ENCODE measurements at regions of chr13 and their contacts with region 1.

Region 1: GRCh38 chr13:50731400-50731799 is 112.1 kb downstream of the DLEU7 start:
- DNase-seq: peak; percentile 91
- H3K4me3 ChIP-seq: peak overlapping the region in 1 of 3 experiments; percentile 28
- H3K27ac ChIP-seq: peak overlapping the region; percentile 99
- H3K4me1 ChIP-seq: peaks cover 16% of the 10 kb centered on the region
- H3K27me3 ChIP-seq: no peaks in the 10 kb centered on the region
- CTCF ChIP-seq: no peak

Region 2: GRCh38 chr13:50594276-50595051 is 136.9 kb before region 1 on chr13:
- CTCF ChIA-PET with region 1: no interaction called
- dilution Hi-C with region 1: no loop called
- in situ Hi-C with region 1: no loop called
- intact Hi-C with region 1: loop called (anchors 5 kb)
- DNase-seq: no peak
- H3K4me3 ChIP-seq: no peak overlapping the region
- H3K27ac ChIP-seq: no peak overlapping the region
- H3K4me1 ChIP-seq: peaks cover 28% of the 10 kb centered on the region
- H3K27me3 ChIP-seq: no peaks in the 10 kb centered on the region
- CTCF ChIP-seq: no peak

Region 3: DNA sequence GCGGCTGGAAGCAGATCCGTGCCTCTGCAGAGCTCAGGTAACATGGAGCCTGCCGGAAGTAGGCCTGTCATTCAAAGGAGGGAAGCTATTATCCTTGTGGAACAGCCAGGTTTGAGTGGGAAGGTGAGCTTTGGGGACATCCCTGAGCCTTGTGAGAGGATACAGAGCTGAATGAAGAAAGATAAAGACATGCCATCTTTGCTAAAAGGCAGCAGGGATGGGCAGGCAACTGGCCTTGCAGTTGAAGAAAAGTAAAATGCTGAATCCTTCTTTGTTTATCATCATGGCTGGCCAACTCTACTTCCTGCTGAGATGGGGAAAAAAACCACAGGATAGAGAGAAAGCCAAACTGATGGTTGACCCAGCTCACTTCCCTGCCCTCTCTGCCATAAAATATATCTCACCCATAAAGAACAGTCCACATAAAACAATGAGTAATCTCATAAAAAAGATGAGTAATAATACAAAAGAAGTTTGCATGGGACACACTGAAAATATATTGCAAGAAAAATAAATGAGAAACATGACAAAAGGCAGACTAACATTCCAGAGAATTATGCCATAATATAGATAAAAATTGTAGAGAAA is 114.2 kb before region 1 on chr13:
- CTCF ChIA-PET with region 1: no interaction called
- dilution Hi-C with region 1: no loop called
- in situ Hi-C with region 1: no loop called
- intact Hi-C with region 1: no loop called
- DNase-seq: peak; percentile 90
- H3K4me3 ChIP-seq: no peak overlapping the region
- H3K27ac ChIP-seq: peak overlapping the region; percentile 0
- H3K4me1 ChIP-seq: peaks cover 9% of the 10 kb centered on the region
- H3K27me3 ChIP-seq: no peaks in the 10 kb centered on the region
- CTCF ChIP-seq: no peak

Region 4: DNA sequence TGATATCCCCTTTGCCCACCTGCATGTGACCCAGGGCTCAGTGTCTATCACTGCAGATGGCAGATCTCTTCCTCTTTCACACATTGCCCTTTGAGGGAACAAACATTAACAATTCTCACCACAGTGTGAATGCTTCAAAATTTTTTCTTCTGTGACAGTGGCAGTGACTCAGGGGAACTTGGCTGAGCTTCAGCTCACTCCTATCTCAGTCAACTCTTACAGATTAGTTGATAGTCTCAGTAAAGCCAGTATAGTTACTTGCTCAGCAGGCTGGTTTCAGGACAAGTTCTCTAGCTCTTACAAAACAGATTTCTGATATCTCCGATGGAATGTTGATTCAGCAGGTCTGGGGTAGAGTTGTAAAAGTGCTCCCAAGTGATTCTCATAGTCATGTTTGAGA is 54.8 kb before region 1 on chr13:
- CTCF ChIA-PET with region 1: no interaction called
- dilution Hi-C with region 1: no loop called
- in situ Hi-C with region 1: no loop called
- intact Hi-C with region 1: loop called (anchors 2 kb)
- DNase-seq: peak; percentile 50
- H3K4me3 ChIP-seq: no peak overlapping the region
- H3K27ac ChIP-seq: no peak overlapping the region
- H3K4me1 ChIP-seq: peaks cover 44% of the 10 kb centered on the region
- H3K27me3 ChIP-seq: no peaks in the 10 kb centered on the region
- CTCF ChIP-seq: no peak

Region 5: DNA sequence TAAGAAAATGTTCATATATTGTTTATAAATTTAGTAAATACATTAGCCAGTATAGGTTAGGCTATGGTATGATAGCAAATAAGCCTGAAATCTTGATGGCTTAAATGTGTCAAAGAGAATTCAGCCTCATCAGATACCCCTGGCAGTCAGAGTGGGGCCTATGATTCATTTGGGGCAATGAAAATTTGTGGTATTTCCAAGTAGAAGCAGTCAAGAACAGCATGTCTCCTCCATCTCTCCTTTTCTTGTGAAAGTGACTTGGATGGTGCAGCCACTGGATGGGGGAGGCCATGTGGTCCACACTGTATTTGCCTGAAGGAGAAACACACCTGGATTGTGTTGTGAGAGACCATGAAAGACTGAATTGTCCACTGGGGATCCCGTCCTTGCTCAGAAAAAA is 29.4 kb after region 1 on chr13:
- CTCF ChIA-PET with region 1: no interaction called
- dilution Hi-C with region 1: no loop called
- in situ Hi-C with region 1: no loop called
- intact Hi-C with region 1: loop called (anchors 1 kb)
- DNase-seq: no peak
- H3K4me3 ChIP-seq: no peak overlapping the region
- H3K27ac ChIP-seq: no peak overlapping the region
- H3K4me1 ChIP-seq: peaks cover 21% of the 10 kb centered on the region
- H3K27me3 ChIP-seq: no peaks in the 10 kb centered on the region
- CTCF ChIP-seq: no peak

Region 6: GRCh38 chr13:50893211-50893852 is 161.9 kb after region 1 on chr13:
- CTCF ChIA-PET with region 1: no interaction called
- dilution Hi-C with region 1: no loop called
- in situ Hi-C with region 1: no loop called
- intact Hi-C with region 1: no loop called
- DNase-seq: no peak
- H3K4me3 ChIP-seq: no peak overlapping the region
- H3K27ac ChIP-seq: no peak overlapping the region
- H3K4me1 ChIP-seq: no peaks in the 10 kb centered on the region
- H3K27me3 ChIP-seq: peaks cover 5% of the 10 kb centered on the region
- CTCF ChIP-seq: no peak

Measured in mammary epithelial cell (primary cell).